ENCODE measurements at regions of chr16 and their contacts with region 1.

Region 1: DNA sequence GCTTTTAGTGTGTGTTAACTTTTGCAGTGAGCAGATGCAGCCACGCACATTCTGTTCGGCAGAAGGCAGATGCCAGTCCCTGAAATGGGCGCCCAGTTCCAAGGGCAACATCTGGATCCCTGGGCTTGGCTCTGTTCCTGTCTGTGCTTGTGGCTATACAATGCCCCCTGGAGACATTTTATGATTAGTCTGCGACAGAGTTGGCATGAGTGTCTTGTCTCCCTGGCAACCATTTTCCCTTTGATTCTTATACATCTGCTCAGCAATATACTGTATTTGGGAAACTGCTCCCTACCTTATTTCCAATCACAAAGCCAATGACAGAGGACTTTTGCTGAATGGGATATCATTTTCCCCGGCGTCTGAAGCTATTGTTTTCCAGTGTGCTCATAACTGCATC is 1629.5 kb upstream of the GOT2 start:
- DNase-seq: no peak
- H3K4me3 ChIP-seq: no peak overlapping the region
- H3K27ac ChIP-seq: no peak overlapping the region
- H3K4me1 ChIP-seq: no peaks in the 10 kb centered on the region
- H3K27me3 ChIP-seq: no peaks in the 10 kb centered on the region
- CTCF ChIP-seq: no peak
- POLR2A ChIP-seq: no peak

Region 2: GRCh38 chr16:58494981-58495520 is 1868.5 kb before region 1 on chr16:
- intact Hi-C with region 1: no loop called
- DNase-seq: peak; percentile 49 to 68
- H3K4me3 ChIP-seq: peak overlapping the region in 1 of 3 donors; percentile 31
- H3K27ac ChIP-seq: peak overlapping the region in 1 of 2 donors; percentile 79
- H3K4me1 ChIP-seq: no peaks in the 10 kb centered on the region
- H3K27me3 ChIP-seq: no peaks in the 10 kb centered on the region
- CTCF ChIP-seq: peak in 1 of 3 donors; percentile 25
- POLR2A ChIP-seq: no peak

Region 3: GRCh38 chr16:59164461-59164860 is 1199.1 kb before region 1 on chr16:
- intact Hi-C with region 1: no loop called
- DNase-seq: no peak
- H3K4me3 ChIP-seq: no peak overlapping the region
- H3K27ac ChIP-seq: no peak overlapping the region
- H3K4me1 ChIP-seq: no peaks in the 10 kb centered on the region
- H3K27me3 ChIP-seq: no peaks in the 10 kb centered on the region
- CTCF ChIP-seq: no peak
- POLR2A ChIP-seq: no peak

Region 4: DNA sequence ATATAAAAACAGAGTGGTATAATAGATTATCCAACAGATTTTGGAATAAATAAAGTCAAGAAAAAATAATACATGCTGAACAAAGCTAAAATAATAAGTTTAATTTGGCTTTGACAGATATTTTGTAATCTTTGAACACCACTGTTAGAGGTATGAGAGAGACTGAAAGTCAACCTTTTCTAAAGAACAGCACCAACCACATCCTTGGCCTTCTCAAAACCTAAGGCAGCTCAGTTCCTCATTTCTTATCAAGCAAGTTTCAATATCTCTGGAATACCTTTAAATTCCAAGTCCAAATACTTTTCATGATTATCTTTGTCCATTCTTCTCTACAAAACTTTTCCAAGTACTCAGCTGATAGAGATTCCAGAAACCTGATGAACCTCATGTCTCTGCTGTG is 68.9 kb after region 1 on chr16:
- intact Hi-C with region 1: loop called (anchors 2 kb)
- DNase-seq: no peak
- H3K4me3 ChIP-seq: no peak overlapping the region
- H3K27ac ChIP-seq: no peak overlapping the region
- H3K4me1 ChIP-seq: no peaks in the 10 kb centered on the region
- H3K27me3 ChIP-seq: no peaks in the 10 kb centered on the region
- CTCF ChIP-seq: no peak
- POLR2A ChIP-seq: no peak

Region 5: GRCh38 chr16:60755907-60756306 is 392.3 kb after region 1 on chr16:
- intact Hi-C with region 1: no loop called
- DNase-seq: no peak
- H3K4me3 ChIP-seq: no peak overlapping the region
- H3K27ac ChIP-seq: no peak overlapping the region
- H3K4me1 ChIP-seq: no peaks in the 10 kb centered on the region
- H3K27me3 ChIP-seq: no peaks in the 10 kb centered on the region
- CTCF ChIP-seq: no peak
- POLR2A ChIP-seq: no peak

Region 6: GRCh38 chr16:61277840-61278239 is 914.3 kb after region 1 on chr16:
- intact Hi-C with region 1: no loop called
- DNase-seq: no peak
- H3K4me3 ChIP-seq: no peak overlapping the region
- H3K27ac ChIP-seq: no peak overlapping the region
- H3K4me1 ChIP-seq: no peaks in the 10 kb centered on the region
- H3K27me3 ChIP-seq: no peaks in the 10 kb centered on the region
- CTCF ChIP-seq: no peak
- POLR2A ChIP-seq: no peak